ENCODE measurements at regions of chr12 and their contacts with region 1.

Region 1: DNA sequence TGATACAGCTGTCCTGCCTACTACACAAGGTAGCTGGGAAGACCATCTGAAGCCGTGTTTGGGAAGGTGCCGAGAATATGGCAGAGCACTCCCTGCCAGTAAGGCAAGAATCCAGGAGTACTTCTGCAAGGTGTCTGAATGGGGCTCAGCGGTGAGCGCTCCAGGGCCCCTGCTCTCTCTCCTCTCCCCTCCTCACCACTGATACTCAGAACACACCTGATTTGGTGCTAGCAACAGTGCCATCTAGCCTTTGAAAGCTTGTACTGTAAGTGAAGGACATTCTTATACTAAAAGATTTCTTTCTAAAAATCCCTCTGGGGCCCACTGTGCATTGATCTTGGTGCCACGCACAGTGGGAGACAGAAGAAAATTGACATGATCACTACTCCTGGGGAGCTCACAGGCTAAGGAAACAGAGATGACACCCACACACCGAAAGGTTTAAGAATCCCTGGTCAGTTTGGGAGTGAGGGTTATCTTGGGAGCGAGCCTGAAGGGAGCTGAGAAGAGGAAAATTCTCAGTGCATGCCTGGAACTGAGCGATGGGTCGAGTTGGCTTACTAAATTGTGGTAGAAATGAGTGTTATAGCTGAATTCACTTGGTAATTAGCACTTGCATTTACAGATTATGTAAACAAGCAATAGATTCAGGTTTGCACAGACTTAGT is 216.9 kb downstream of the NTF3 start:
- DNase-seq: no peak
- H3K4me3 ChIP-seq: no peak overlapping the region
- CTCF ChIP-seq: peak; percentile 69

Region 2: DNA sequence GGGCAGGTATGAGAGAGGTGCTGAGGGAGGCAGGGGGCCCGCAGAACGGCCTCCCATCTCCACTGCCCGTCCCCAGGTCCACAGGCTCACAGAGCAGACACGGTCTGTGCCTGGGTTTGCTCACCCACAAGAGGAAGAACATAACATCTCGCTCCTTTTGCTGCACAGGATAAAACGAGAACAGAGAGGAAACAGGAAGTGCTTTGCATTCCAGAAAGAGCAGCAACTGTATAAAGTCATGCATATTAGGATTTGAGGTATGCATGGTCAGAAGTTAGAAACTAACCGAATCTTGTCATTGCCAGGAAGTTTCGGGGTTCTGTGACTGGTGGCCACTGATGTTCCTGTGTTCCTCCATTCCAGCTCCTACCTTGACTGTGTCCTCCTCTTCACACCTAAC is 191.9 kb before region 1 on chr12:
- CTCF ChIA-PET with region 1: interaction called, 10 read pairs
- POLR2A ChIA-PET with region 1: no interaction called
- DNase-seq: peak; percentile 67
- H3K4me3 ChIP-seq: no peak overlapping the region; the same call in 1 of the 2 replicates
- CTCF ChIP-seq: no peak

Region 3: GRCh38 chr12:5493018-5493417 is 155.8 kb before region 1 on chr12:
- CTCF ChIA-PET with region 1: interaction called, 26 read pairs
- POLR2A ChIA-PET with region 1: no interaction called
- DNase-seq: no peak
- H3K4me3 ChIP-seq: no peak overlapping the region
- CTCF ChIP-seq: peak; percentile 16

Region 4: DNA sequence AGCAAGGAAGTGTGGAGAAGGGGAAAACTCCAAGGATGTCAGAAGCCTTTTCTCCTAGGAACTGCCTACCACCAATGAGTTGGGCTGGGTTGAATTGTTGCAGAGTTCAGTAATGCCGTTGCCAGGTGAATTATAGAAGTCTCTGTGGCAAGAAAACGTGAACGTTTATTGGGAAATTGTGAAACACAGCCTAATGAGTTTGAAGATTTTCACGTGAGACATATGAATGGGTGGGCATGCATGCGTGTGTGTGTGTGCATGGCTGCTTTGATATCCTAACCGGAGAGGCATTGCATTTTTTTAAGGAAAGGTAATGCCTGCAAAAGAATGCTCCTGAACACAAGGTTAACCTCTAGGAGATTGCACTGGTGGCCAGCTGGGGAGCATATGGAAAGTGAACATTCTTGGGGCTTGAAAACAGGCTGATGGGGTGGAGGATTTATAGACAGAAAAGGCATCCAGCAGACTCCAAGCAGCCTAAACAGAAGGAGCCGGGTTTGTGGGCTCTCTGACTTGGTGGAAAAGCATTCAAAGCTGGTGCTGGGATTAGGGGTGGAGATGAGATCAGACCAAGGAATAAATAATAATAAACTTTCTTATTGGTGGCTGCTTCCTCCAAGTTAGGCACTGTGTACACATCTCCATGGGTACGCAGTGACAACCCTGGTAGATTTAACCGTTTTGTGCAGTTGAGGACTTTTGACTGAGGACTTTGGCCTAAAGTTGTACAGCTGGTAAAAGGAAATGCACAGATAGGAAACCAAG is 149.1 kb before region 1 on chr12:
- CTCF ChIA-PET with region 1: interaction called, 24 read pairs
- POLR2A ChIA-PET with region 1: no interaction called
- DNase-seq: peak; percentile 94
- H3K4me3 ChIP-seq: no peak overlapping the region
- CTCF ChIP-seq: no peak

Region 5: DNA sequence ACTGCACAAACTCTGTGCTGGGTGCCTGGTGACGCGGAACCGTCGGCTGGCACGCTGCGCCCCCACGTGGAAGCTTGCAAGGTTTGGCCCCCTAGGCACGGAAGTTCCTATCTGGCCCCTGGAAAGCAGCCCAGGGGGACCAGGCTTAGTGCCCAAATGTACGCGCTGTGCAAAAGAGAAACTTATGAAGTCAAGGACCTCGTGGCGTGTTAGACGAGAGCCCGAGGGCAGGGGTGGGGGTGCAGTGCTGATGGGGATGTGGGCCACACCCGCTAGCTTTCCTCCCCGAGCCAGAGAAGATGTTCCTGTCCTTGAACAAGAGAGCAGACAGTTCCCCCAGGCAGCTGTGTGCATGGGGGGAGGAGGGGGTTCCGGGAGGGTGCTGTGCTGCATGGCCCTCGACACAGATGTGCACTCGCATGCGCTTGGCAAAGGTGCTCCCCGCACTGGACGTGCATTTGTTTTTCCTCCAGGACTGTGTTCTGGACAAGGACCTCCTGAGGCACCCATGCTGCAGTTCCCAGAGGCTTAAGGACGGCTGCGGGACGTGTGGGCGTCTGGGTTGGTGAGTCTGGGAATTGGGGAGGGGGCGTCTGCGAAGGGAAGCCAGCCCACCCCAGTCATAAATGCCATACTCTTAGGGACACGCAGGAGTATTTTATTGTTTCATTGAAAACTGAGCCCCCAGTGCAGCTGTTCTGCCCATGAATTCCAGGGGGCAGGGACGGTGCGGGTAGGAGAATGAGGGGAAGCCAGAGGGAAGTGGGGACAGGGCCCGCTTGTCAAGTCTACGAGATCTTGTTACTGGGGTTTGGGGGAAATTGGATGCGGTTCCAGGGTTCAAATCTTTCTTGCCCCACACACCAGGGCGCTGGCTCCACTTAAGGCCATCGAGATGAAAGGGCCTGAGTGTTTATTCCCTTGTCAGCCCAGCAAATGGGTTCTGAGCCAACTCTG is 136.9 kb before region 1 on chr12:
- CTCF ChIA-PET with region 1: interaction called, 27 read pairs
- POLR2A ChIA-PET with region 1: no interaction called
- DNase-seq: no peak
- H3K4me3 ChIP-seq: no peak overlapping the region
- CTCF ChIP-seq: peak; percentile 80

Region 6: DNA sequence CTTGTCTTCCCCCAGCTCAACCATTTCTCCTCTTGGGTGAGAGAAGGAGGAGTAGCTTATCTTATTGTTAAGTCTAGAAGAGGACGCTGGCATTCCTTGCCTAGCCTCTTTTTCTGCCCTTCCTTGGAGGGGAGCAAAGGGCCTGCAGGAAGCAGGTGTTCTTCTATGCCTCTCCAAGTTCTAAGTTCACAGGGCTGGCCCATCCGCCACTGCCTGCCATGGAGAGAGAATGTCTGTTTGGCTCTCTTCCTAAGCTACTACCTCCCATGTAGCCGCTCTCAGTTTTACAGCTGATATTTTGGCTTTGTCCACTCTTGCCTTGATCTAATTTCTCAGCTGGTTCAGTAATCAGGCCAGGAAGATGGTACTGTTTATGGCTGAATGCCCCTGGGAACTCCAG is 15.7 kb before region 1 on chr12:
- CTCF ChIA-PET with region 1: interaction called, 51 read pairs
- POLR2A ChIA-PET with region 1: no interaction called
- DNase-seq: no peak
- H3K4me3 ChIP-seq: no peak overlapping the region
- CTCF ChIP-seq: no peak

Region 7: DNA sequence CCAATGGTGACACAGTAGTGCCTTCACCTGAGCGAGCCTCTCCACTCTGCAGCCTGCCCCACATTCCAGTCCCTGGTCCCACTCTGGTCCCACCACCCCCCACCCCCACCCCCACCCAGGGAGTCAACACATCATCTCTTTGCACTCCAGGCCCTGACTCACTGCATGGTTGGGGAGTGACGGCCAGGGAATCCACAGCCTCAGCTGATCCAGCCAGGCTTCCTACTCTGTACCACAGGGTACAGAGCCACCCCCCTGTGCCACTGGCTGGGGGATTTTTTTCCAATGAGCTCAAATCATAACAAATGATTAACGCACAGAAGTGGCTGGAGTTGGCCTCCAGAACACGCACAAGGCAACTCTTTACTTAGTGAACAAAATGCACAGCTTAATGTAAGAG is 16.8 kb after region 1 on chr12:
- CTCF ChIA-PET with region 1: interaction called, 36 read pairs
- POLR2A ChIA-PET with region 1: no interaction called
- DNase-seq: peak; percentile 67
- H3K4me3 ChIP-seq: no peak overlapping the region
- CTCF ChIP-seq: no peak

Region 8: GRCh38 chr12:5678176-5678575 is 29.4 kb after region 1 on chr12:
- CTCF ChIA-PET with region 1: no interaction called
- POLR2A ChIA-PET with region 1: no interaction called
- DNase-seq: no peak
- H3K4me3 ChIP-seq: no peak overlapping the region
- CTCF ChIP-seq: no peak

Region 9: GRCh38 chr12:5713599-5714081 is 64.8 kb after region 1 on chr12:
- CTCF ChIA-PET with region 1: no interaction called
- POLR2A ChIA-PET with region 1: no interaction called
- DNase-seq: no peak
- H3K4me3 ChIP-seq: no peak overlapping the region
- CTCF ChIP-seq: no peak

Region 10: DNA sequence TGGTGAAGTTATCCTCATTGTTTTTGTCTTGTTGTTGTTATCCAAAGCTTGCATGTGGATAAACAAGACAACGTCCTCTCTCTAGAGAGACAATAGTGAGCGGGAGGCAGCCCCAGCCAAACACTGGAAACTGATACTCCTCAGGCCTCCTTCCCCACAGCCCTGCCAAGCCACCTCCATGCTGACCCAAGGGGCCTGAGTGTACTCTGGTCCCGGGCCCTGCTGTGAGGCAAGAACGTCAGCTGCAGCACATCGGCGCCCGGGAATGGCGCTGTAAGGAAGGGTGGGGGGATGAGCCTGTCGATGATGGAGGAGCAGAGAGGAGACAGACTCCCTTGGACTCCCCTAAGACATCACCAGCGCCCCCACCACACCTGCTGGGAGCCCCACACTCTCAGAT is 212.6 kb after region 1 on chr12:
- CTCF ChIA-PET with region 1: no interaction called
- POLR2A ChIA-PET with region 1: no interaction called
- DNase-seq: no peak
- H3K4me3 ChIP-seq: no peak overlapping the region
- CTCF ChIP-seq: no peak